ENCODE measurements at regions of chr6 and their contacts with region 1.

Region 1: GRCh38 chr6:83215131-83216047 is 22.2 kb downstream of the RWDD2A start:
- DNase-seq: peak; percentile 38
- ATAC-seq: peak; percentile 97
- H3K4me3 ChIP-seq: no peak overlapping the region
- H3K27ac ChIP-seq: no peak overlapping the region
- H3K4me1 ChIP-seq: no peaks in the 10 kb centered on the region
- H3K27me3 ChIP-seq: no peaks in the 10 kb centered on the region
- CTCF ChIP-seq: peak; percentile 78 to 89 (median 83)
- POLR2A ChIP-seq: no peak
- RAD21 ChIP-seq: peak; percentile 80

Region 2: DNA sequence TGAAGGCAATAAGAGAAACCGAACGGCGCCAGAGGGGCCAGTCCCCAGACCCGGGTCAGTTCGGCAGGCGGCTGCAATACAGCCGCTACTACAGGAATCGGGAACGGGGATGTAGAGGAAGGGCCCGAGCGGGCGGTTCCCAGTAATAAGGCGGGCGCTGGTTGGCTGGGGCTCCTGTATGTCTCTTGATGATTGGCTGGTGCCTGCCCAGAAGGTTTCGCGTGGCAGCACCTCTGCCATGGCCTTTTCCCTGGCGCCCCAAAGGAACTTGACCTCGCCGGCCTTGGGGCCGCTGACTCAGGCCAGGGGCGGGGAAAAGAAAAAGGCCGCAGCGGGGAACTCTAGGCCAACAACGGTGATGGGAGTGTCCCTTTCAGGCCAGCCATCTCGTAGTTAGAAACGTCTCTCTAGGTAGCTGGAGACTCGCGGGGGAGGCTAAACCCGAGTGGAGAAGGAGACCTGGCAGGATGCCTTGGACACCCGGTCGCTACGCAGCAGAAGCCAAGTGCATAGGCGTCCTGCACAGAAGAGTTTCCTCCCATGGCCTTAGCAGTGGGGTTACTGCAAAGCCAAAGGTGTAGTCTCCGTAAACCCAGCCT is 967.7 kb before region 1 on chr6 and contains the start of gene IBTK:
- CTCF ChIA-PET with region 1: no interaction called
- POLR2A ChIA-PET with region 1: no interaction called
- RAD21 ChIA-PET with region 1: no interaction called
- intact Hi-C with region 1: loop called (anchors 5 kb)
- DNase-seq: peak; percentile 86
- ATAC-seq: peak; percentile 80
- H3K4me3 ChIP-seq: peak within 1 kb of the TSS; percentile 86 to 90
- H3K27ac ChIP-seq: peak within 1 kb of the TSS; percentile 72
- H3K4me1 ChIP-seq: peaks cover 14 to 27% of the 10 kb centered on the region in 2 experiments
- H3K27me3 ChIP-seq: no peaks in the 10 kb centered on the region
- CTCF ChIP-seq: no peak
- POLR2A ChIP-seq: no peak
- RAD21 ChIP-seq: no peak
- total RNA-seq, gene IBTK: 36.6 TPM

Measured in HCT116 (cell line).